ENCODE measurements at regions of chr2 and their contacts with region 1.

Region 1: GRCh38 chr2:132589111-132589830 is 80.7 kb downstream of the LYPD1 start:
- DNase-seq: no peak
- ATAC-seq: no peak
- H3K4me3 ChIP-seq: no peak overlapping the region
- H3K27ac ChIP-seq: no peak overlapping the region
- H3K4me1 ChIP-seq: no peaks in the 10 kb centered on the region
- H3K27me3 ChIP-seq: peaks cover 0 to 10% (median 0%) of the 10 kb centered on the region in 7 donors
- CTCF ChIP-seq: no peak

Region 2: DNA sequence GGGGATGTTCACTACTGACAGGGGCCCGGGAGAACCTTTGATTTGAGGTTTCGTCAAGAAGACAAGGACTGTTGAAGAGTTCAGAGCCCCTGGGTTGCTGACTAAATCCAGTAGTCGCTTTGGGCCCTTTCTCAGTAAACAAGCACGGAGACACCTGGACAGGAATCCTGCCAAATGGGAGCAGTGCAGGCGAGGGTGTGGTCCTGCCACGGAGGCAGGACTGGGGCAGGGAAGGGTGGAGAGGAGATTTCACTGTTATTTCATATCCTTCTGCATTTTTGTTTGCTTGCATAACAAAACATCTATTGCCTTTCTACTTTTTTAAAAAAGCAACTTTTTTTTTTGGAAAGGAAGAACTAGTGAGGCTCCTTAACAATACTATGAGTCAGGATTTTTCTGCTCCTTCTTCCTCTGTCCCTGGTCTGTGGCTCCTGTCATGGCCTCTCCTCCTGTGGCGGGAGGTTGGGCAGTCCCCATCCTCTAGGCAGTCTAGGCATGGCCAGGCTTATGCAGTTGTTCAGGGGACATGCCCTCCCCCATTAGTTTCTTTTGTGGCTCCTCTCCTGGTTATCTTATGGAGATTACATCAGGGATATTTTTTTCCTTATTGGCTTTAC is 1694.8 kb before region 1 on chr2:
- intact Hi-C with region 1: loop called in 1 of 10 experiments (anchors 5 kb)
- DNase-seq: no peak
- ATAC-seq: no peak
- H3K4me3 ChIP-seq: no peak overlapping the region
- H3K27ac ChIP-seq: no peak overlapping the region
- H3K4me1 ChIP-seq: no peaks in the 10 kb centered on the region
- H3K27me3 ChIP-seq: peaks cover 0 to 36% (median 3%) of the 10 kb centered on the region in 7 donors
- CTCF ChIP-seq: no peak

Region 3: DNA sequence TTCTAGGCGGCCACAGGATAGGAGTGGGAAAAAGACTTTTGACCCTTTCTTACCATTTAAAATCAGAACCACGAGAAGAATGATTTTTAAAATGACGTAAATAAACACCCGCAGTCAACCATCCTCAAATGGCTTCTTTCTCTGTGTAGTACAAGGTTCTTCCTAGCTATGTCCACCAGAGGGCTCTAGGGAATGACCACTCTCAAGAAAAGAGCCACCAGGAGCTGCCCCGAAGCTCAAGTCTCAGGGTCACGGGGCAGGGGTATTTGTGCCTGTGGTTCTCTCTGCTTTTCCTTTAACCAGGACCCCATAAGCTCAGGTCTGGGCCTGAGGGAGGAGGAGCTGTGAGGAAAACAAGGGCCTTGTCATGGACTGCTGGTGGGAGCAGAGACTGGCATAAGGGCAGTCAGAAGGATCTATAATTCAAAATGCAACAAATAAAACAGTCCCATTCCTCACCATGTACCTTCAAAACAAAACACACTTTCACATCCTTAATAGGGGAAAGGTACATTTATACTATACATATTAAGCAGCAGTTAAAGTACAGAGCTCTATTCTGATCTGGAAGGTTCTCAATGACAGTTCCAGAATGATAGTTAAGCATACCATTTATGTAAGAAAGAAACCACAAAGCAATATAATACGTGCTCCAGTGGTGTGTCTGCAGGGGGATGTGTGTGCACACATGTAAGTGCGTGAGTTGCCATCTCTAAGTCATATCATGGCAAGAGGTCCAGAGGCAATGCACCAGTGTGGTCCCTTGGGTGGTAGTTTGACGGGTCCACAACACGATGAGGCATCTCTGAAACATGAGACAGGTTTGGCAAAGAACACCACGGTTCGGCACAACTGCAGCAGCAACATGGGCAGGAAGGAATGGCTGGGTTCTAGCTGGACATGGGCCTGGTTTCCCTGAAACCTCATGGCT is 62.1 kb after region 1 on chr2:
- intact Hi-C with region 1: no loop called
- DNase-seq: no peak
- ATAC-seq: peak in 2 of 8 donors; percentile 58 to 71
- H3K4me3 ChIP-seq: no peak overlapping the region
- H3K27ac ChIP-seq: no peak overlapping the region
- H3K4me1 ChIP-seq: no peaks in the 10 kb centered on the region
- H3K27me3 ChIP-seq: peaks cover 0 to 48% (median 5%) of the 10 kb centered on the region in 7 donors
- CTCF ChIP-seq: peak in 5 of 9 donors; percentile 44 to 67 (median 53)